GM10248 (cell line): ENCODE measurements at regions of chr20 and their contacts with region 1.

Region 1: DNA sequence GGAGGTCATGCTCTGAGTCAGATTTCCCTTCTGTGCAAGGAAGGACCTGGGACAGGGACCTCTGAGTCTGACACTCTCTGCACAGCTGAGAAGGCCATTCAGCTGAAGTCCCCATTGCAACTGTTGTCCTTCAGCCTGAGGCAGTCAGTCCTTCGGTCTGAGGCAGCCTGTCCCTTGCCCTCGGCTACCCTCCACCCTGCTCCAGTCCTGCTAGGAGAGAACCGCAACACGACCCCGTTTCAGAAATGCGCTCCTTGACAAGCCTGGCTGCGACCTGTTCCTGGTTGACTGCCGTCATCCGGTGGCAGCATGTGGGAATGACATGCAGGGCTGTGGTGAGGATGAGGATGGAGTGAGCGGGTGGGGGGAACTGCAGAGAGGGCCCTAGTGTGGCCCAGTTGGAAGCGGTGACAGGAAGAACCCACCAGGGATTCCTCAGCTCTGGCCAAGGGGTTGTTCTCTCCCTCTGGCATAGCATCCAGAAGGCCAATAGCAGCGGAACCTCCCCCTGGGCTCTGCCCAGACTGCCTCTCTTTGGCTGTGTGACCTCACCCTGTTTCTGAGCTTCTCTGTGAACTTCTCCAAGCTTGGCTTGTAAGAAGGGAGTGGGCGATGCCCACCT is 40.3 kb upstream of the ANGPT4 start:
- DNase-seq: peak; percentile 80
- CTCF ChIP-seq: peak; percentile 98

Region 2: GRCh38 chr20:825710-826421 is 130.6 kb before region 1 on chr20:
- CTCF ChIA-PET with region 1: interaction called, 29 read pairs
- POLR2A ChIA-PET with region 1: no interaction called
- DNase-seq: no peak
- CTCF ChIP-seq: no peak

Region 3: DNA sequence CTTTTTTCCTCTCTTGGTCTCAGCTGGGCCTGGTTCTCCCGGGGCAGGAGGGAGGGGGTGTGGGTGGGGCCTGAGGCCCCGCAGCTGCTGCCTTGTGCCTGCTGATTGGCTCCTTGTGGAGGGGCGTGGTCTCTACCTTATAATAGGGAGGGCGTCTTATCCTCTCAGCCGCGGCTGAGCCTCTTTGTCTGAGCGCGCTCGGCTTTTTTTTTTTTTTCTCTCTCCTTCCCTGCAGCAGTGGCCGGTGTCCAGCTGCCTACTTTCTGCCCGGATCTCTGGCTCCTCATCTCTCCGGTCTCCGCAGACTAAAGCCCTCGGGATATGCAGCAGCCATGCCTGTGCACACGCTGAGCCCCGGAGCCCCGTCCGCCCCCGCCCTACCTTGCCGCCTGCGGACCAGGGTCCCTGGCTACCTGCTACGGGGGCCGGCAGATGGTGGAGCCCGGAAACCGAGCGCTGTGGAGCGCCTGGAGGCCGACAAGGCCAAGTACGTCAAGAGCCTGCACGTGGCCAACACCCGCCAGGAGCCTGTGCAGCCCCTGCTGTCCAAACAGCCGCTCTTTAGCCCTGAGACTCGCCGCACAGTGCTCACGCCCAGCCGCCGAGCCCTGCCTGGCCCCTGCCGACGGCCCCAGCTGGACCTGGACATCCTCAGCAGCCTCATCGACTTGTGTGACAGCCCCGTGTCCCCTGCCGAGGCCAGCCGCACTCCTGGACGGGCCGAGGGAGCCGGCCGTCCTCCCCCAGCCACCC is 111.8 kb before region 1 on chr20:
- CTCF ChIA-PET with region 1: interaction called, 3 read pairs
- POLR2A ChIA-PET with region 1: interaction called, 10 read pairs
- DNase-seq: peak; percentile 96
- CTCF ChIP-seq: no peak

Region 4: GRCh38 chr20:944774-945410 is 11.5 kb before region 1 on chr20:
- CTCF ChIA-PET with region 1: interaction called, 29 read pairs
- POLR2A ChIA-PET with region 1: no interaction called
- DNase-seq: no peak
- CTCF ChIP-seq: no peak

Region 5: GRCh38 chr20:973785-974194 is 17.3 kb after region 1 on chr20:
- CTCF ChIA-PET with region 1: interaction called, 63 read pairs
- POLR2A ChIA-PET with region 1: no interaction called
- DNase-seq: peak; percentile 72
- CTCF ChIP-seq: peak; percentile 44